Activated CD8-positive, alpha-beta T cell treated with anti-CD3 and anti-CD28 coated beads, Interleukin-2, amount 10 ng/mL, durations not matched to agents 7 days and 5 days (primary cell): ENCODE measurements at regions of chr19 and their contacts with region 1.

Region 1: GRCh38 chr19:46189971-46190888 is 39.3 kb upstream of the IGFL1 start:
- DNase-seq: no peak
- ATAC-seq: no peak
- H3K4me3 Mint-ChIP-seq: no peak overlapping the region
- H3K27ac Mint-ChIP-seq: no peak overlapping the region
- H3K4me1 Mint-ChIP-seq: no peaks in the 10 kb centered on the region
- H3K27me3 Mint-ChIP-seq: peaks cover 37% of the 10 kb centered on the region

Region 2: DNA sequence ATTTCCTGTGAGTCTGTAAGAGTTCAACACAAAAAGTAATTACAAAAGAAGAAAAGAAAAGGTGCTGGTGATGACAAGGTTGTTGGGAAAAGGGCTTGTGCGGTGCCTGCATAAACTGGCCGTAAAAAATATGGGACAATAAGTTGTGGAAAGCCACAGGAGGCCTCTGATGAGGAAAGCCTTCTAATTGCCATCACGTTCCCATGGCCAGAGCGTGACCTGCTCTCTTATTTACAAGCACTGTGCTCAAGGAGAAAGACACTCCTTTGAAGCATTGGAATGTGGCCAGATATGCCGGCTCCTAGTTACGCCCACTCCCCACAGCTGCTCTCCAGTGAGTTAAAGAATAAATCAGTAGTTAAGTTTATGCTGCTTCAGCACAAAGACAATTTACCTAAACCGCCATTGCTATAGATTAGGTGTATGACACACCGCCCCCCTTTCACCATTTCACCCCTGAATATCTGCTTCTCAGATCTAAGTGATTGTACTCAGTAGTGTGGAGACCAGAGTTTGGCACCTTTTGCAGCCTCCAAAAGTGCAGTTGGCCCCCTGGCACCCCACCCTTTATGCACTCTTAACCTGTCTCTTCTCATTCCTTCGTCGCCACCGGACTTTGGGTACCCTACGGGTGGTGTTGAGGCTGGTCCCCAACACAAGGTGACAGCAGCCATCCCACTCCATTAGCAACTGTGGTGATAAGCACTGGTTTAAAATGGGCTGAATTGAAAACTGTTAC is 159.2 kb before region 1 on chr19:
- CTCF ChIA-PET with region 1: interaction called, 10 read pairs
- POLR2A ChIA-PET with region 1: no interaction called
- DNase-seq: no peak
- ATAC-seq: no peak
- H3K4me3 Mint-ChIP-seq: no peak overlapping the region
- H3K27ac Mint-ChIP-seq: no peak overlapping the region
- H3K4me1 Mint-ChIP-seq: peaks cover 13% of the 10 kb centered on the region
- H3K27me3 Mint-ChIP-seq: peaks cover 13% of the 10 kb centered on the region

Region 3: DNA sequence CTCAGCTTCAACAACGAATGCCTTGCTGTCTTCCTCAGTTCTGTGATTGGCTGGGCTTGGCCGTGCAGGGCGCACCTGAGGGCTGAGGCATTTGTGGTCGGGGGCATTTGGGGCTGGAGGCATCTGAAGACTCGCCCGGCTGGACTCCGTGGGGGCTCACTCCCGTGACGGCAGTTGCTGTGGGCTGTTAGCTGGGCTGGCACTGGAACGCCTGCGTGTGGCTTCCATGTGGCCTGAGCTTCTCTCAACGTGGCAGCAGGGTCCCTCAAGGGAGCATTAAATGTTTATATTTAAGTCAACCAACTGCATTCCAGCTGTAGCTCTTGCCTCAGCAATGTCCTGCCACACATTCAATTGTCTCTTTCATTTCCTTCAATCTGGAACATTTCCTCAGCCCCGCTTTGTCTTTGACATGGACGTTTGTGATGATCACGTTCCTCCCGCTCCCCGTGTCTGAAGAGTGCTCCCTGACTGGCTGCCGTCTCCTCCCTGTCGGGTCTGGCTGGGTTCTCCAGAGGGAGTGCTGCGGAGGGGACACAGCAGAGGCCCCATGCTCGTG is 202.1 kb after region 1 on chr19:
- CTCF ChIA-PET with region 1: no interaction called
- POLR2A ChIA-PET with region 1: no interaction called
- DNase-seq: no peak
- ATAC-seq: no peak
- H3K4me3 Mint-ChIP-seq: no peak overlapping the region
- H3K27ac Mint-ChIP-seq: no peak overlapping the region
- H3K4me1 Mint-ChIP-seq: peaks cover 4% of the 10 kb centered on the region
- H3K27me3 Mint-ChIP-seq: no peaks in the 10 kb centered on the region